HepG2 (cell line): ENCODE measurements at regions of chr15 and their contacts with region 1.

Region 1: DNA sequence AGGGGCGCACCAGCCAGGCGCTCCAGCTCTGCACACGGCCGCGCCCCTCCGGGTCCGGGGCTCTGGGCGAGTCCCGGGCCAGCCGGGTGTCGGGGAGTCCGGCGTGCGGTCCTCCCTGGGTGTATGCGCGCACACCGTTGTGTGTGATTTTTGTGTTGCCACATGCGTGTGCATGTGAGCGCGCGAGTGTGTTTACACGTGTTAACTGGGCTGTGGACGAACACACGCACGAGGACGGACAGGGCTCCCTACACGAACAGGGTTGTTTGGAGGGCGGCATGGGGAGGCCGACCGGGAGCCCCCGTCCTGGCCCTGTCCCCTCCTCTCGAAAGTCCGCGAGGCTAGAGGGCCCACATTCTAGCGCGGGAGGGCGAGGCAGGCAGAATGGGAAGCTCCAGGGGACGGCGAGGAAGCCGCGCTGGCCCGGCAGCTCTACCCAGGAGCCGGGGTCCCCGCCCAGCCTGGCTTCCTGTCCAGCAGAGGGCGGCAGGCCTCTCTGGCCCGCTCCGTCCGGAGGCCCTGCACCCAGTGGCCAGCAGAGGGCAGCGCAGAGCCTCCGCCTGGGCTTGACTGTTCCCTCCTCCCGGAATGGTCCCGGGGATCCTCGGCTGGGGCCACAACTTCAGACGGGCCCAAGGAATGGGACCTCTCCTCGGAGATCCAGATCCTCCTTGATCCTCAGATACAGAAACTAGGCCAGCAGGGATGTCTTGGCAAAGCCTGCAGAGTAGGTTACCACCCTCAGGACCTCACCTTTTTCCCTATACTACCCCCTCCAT is 611 bp upstream of the LINGO1 start:
- DNase-seq: peak; percentile 62
- ATAC-seq: peak; percentile 94
- H3K4me3 ChIP-seq: peak overlapping the region; percentile 35 to 74 (median 43); a peak in 5 of 6 replicates
- H3K27ac ChIP-seq: no peak overlapping the region
- H3K4me1 ChIP-seq: peaks cover 5% of the 10 kb centered on the region; the same call in 1 of the 2 replicates
- H3K27me3 ChIP-seq: peaks cover 6 to 43% of the 10 kb centered on the region in 2 experiments; a peak in 4 of 5 replicates
- CTCF ChIP-seq: peak; percentile 100
- EP300 ChIP-seq: no peak
- POLR2A ChIP-seq: no peak
- RAD21 ChIP-seq: peak; percentile 96

Region 2: DNA sequence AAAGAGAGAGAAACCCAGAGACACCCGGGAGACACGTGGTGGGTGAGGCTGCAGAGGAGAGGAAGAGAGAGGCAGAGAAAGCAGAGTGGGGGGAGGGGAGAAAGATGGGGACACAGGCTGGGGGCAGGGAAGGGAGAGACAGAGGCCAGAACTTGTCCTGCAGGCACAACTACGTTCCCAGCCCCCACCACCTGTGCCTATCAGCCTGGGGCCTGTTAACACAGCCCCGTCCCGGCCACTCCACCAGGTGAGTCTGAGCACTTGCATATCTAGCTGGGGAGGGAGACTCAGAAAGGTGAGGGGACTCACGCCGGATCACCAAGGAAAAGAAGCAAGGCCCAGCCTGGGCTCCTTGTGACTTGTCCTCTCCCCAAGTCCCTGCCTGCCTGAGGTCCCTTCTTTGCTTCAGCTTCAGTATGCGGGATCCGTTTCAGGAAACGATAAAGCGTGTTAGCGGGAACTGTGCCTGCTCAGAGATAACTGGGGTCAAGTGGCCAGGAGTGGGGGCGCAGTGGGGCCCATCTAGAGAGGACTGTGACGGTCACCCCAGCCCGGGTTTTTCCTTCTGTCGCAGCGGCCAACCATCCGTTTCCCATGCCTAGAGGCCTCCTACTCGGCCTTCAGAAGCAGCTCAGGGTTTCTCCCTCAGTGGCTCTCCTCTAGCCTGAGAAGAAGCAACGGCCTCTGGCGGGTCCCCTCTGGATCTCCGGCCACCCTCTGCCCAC is 11.0 kb before region 1 on chr15:
- CTCF ChIA-PET with region 1: interaction called, 12 read pairs
- POLR2A ChIA-PET with region 1: interaction called, 3 read pairs
- in situ Hi-C with region 1: no loop called
- intact Hi-C with region 1: no loop called
- DNase-seq: no peak
- ATAC-seq: peak; percentile 59
- H3K4me3 ChIP-seq: peak overlapping the region; percentile 12 to 64 (median 40); a peak in 5 of 6 replicates
- H3K27ac ChIP-seq: no peak overlapping the region
- H3K4me1 ChIP-seq: peaks cover 40% of the 10 kb centered on the region
- H3K27me3 ChIP-seq: peaks cover 0 to 5% of the 10 kb centered on the region in 2 experiments; a peak in 4 of 5 replicates
- CTCF ChIP-seq: no peak
- EP300 ChIP-seq: no peak
- POLR2A ChIP-seq: no peak
- RAD21 ChIP-seq: no peak

Region 3: DNA sequence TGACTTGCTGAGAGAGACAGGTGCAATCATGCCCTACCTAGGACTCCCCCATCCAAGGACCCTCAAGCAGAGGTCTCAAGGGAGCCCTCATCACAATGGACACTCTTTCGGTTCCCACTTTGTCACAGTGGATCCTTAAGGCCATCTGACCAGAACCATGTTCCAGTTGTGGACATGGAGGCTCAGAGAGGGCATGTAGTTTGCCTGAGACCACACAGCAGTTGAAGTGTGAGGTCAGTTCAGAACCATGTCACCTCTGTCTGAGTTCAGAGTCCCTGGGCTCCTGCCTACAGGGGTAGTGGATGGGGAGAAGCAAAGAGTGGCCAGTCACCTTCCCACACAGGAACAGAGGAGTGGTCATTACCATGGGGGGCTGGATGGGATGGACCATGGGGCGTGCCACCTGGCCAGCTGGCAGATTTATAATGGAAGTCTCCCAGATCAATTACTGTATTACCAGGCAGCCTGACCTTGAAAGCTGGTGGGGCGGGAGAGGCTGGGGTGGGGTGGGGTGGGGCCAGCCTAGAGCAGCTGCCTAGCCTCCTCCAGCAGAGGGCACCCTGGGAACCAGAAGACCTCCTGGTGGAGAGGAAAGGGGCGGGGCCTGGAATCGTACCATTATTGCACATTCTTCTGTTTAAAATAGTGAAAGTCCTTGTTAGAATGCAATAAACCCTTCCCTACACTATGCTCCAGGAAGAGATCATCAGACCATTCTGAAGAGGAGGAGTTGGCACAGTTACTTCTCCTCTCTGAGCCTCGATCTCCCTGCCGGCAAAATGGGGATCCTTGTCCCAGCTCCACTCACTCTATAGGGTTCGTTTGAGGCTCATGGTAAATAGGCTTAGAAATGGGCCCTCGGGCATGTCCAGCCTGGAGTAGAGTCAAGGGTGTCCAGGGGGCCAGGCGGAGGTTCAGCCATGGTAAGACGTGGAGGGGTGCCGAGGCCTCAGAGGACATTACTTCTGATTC is 26.3 kb after region 1 on chr15:
- CTCF ChIA-PET with region 1: interaction called, 17 read pairs
- POLR2A ChIA-PET with region 1: no interaction called
- in situ Hi-C with region 1: no loop called
- intact Hi-C with region 1: no loop called
- DNase-seq: peak; percentile 74
- ATAC-seq: peak; percentile 70
- H3K4me3 ChIP-seq: no peak overlapping the region
- H3K27ac ChIP-seq: no peak overlapping the region
- H3K4me1 ChIP-seq: no peaks in the 10 kb centered on the region
- H3K27me3 ChIP-seq: peaks cover 3 to 14% of the 10 kb centered on the region in 2 experiments
- CTCF ChIP-seq: peak; percentile 51
- EP300 ChIP-seq: no peak
- POLR2A ChIP-seq: no peak
- RAD21 ChIP-seq: no peak

Region 4: GRCh38 chr15:77821188-77821958 is 188.1 kb after region 1 on chr15:
- CTCF ChIA-PET with region 1: interaction called, 38 read pairs
- POLR2A ChIA-PET with region 1: no interaction called
- in situ Hi-C with region 1: loop called (anchors 25 kb)
- intact Hi-C with region 1: loop called (anchors 1 kb)
- DNase-seq: peak; percentile 24
- ATAC-seq: peak; percentile 87
- H3K4me3 ChIP-seq: no peak overlapping the region
- H3K27ac ChIP-seq: no peak overlapping the region
- H3K4me1 ChIP-seq: no peaks in the 10 kb centered on the region
- H3K27me3 ChIP-seq: peaks cover 9 to 51% of the 10 kb centered on the region in 2 experiments
- CTCF ChIP-seq: peak; percentile 87
- EP300 ChIP-seq: no peak
- POLR2A ChIP-seq: no peak
- RAD21 ChIP-seq: peak; percentile 74; the same call in 1 of the 2 replicates